Head of caudate nucleus (tissue), 42 donors: ENCODE measurements at regions of chr1 and their contacts with region 1.

Region 1: DNA sequence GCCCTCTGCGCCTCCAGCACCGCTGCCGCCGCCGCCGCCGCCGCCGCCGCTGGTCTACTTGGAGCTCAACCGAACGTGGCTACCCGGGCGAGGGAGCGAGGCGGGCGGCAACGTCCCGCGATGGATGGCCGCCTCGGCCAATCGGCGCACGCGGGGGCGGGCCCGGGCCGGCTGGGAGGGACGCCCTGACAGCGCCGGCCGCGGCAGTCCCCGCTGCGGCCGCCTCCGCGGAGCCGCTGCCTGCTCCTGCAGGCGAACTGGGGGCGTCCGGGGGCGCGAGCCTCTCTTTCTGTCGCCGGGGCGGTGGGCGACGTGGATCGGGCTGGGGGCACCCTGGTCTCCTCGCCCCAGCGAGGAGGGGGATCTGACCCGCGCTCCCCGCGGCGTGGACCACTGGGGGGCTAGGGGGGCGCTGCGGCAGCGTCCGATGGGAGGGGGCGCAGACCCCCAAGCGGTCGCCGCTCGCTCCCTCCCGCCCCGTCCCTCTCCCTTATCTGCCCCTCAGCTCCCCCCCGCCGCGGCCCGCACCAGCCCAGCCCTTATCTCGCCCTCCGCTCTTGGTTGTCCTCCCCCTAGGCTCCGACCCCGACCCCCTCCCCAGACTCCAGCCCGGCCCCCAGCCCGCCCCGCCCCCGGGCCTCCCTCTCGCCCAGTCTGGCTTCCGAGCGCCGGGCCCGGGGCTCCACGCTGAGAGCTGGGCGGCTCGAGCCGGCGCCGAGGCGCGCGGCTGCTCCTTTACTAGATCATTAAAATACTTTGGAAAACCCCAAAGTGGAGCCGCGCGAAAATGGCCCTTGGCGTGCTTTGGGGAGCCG is at the start of gene SSBP3:
- DNase-seq: peak; percentile 77 to 97 (median 94)

Region 2: DNA sequence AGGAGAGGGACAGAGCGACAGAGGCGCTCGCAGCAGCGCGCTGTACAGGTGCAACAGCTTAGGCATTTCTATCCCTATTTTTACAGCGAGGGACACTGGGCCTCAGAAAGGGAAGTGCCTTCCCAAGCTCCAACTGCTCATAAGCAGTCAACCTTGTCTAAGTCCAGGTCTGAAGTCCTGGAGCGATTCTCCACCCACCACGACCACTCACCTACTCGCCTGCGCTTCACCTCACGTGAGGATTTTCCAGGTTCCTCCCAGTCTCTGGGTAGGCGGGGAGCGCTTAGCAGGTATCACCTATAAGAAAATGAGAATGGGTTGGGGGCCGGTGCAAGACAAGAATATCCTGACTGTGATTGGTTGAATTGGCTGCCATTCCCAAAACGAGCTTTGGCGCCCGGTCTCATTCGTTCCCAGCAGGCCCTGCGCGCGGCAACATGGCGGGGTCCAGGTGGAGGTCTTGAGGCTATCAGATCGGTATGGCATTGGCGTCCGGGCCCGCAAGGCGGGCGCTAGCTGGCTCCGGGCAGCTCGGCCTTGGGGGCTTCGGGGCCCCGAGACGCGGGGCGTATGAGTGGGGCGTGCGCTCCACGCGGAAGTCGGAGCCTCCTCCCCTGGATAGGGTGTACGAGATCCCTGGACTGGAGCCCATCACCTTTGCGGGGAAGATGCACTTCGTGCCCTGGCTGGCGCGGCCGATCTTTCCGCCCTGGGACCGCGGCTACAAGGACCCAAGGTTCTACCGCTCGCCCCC is 206.6 kb before region 1 on chr1 and contains the starts of genes CYB5RL and MRPL37:
- intact Hi-C with region 1: loop called (anchors 10 kb)
- DNase-seq: peak; percentile 90 to 98 (median 94)

Region 3: GRCh38 chr1:54273092-54273794 is 133.3 kb before region 1 on chr1:
- intact Hi-C with region 1: loop called (anchors 5 kb)
- DNase-seq: peak; percentile 43 to 90 (median 79)

Region 4: DNA sequence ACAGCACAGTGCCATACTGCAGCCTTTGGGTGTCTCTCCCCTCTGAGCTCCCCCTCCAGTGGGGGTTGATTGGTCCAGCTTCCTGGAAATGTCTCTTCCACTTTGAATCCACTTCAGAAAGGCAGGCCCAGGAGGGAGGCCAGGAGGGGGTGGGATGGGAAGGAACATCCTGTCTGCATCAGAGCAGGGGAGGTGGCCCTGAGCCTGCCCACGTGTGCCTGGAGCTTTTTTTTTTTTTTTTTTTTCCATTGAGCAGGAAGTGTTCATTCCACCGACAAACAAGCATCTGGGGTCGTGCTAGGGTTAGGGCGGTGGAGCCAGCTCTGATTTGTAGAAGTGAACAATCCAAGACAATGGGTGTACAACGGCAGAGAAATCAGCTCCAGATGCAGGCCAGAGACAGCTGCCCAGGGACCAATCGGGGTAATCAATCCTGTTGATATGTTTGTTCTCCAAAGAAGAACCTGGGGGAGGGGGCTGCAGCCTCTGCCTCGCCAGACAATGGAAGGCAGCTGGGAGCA is 93.7 kb before region 1 on chr1:
- intact Hi-C with region 1: no loop called
- DNase-seq: no peak

Region 5: DNA sequence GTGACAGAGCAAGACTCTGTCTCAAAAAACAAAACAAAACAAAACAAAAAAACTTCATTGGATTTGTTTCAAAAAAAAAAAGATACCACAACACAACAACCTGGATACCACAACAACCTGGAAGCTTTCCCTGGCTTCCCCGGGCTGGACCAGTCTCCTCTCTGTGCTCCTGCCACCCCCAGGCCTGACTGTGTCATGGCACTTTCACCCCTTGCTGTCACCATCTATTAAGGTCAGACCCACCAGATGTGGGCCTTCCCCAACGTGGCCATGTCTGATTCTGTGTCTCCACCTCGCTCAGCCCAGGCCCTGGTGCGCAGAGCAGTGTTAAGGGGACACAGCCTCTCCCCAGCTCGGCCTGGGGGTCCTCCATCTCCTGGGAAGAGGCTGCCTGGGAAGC is 113.2 kb after region 1 on chr1:
- intact Hi-C with region 1: no loop called
- DNase-seq: peak in 2 of 42 donors; percentile 34 to 47

Region 6: GRCh38 chr1:54604572-54605370 is 198.2 kb after region 1 on chr1:
- intact Hi-C with region 1: no loop called
- DNase-seq: no peak